ENCODE measurements at regions of chr2 and their contacts with region 1.

Region 1: DNA sequence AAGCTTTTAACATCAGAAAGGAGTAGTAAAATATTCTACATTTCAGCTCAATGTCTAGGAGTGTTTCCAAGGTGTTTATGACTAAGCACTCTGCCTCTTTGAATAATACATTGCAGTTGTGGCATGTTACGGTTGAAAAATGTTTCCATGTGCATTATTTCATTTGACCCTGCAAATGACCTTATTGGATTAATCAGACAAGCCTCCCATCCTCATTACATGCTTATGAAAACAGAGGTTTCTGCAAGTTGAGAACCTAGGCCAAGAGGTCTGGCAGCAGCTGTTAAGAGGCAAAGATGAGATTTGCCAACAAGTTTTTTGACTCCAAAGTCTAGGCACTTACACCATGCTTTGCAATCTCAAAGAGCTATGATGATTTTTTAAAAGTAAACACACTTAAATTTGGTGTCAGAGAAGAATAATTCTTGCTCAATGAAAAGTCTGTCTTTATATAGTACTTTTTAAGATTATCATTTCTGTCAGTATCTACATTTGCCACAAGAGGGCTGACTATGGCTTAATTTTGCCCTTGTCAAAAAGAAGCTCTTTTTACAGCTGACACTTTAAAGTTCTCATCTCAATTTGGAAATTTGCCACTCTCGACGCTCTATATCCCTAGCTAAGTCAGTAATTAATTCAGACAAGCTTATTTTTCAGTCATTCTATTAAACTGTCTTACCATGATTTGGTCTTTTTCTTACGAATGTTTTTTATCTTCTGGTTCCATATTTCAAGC is 260.6 kb downstream of the PAX3 start:
- DNase-seq: peak; percentile 31

Region 2: GRCh38 chr2:222024932-222025880 is 13.0 kb before region 1 on chr2:
- CTCF ChIA-PET with region 1: interaction called, 16 read pairs
- POLR2A ChIA-PET with region 1: no interaction called
- DNase-seq: peak; percentile 43

Region 3: GRCh38 chr2:222504719-222505118 is 466.5 kb after region 1 on chr2:
- CTCF ChIA-PET with region 1: no interaction called
- POLR2A ChIA-PET with region 1: no interaction called
- DNase-seq: no peak

Measured in HEK293T (cell line).